HEK293T (cell line): ENCODE measurements at regions of chr14 and their contacts with region 1.

Region 1: GRCh38 chr14:93115069-93115820 is 480 bp downstream of the ITPK1 start:
- DNase-seq: peak; percentile 81

Region 2: GRCh38 chr14:93073910-93074769 is 41.1 kb before region 1 on chr14:
- CTCF ChIA-PET with region 1: no interaction called
- POLR2A ChIA-PET with region 1: no interaction called
- DNase-seq: no peak

Region 3: DNA sequence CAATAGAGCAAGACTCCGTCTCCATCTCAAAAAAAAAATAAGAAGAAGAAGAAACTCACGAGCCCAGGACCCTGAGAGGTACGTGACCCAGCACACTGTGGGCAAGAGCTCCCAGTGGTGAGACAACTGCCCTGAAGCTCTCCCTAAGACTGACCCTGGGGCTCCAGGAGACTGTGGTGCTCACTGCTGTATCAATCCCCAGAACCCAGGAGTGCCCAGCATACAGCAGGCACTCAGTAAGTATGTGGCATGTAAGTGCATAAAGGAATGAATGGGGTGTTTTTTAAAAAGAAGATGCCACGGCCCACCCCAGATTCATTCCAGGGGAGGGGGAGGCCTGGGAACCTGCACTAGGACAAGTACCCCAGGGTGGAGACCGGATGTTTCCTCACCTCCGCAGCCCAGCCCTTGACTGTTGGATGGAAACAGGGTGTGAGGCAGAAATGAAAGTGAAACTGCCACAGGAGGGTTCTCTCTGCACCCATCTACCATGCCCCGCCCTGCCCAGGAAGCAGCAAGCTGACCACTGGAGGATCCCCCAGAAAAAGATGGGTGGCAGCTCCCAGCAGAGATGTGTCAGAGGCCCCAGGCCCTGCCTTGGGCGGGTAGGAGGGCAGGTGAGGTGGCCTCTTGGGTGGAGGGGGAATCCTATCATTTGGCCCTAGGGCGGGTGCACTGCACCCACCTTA is 11.7 kb before region 1 on chr14:
- CTCF ChIA-PET with region 1: interaction called, 16 read pairs
- POLR2A ChIA-PET with region 1: no interaction called
- DNase-seq: no peak

Region 4: GRCh38 chr14:93137864-93138263 is 22.6 kb after region 1 on chr14:
- CTCF ChIA-PET with region 1: interaction called, 49 read pairs
- POLR2A ChIA-PET with region 1: interaction called, 5 read pairs
- DNase-seq: peak; percentile 41

Region 5: DNA sequence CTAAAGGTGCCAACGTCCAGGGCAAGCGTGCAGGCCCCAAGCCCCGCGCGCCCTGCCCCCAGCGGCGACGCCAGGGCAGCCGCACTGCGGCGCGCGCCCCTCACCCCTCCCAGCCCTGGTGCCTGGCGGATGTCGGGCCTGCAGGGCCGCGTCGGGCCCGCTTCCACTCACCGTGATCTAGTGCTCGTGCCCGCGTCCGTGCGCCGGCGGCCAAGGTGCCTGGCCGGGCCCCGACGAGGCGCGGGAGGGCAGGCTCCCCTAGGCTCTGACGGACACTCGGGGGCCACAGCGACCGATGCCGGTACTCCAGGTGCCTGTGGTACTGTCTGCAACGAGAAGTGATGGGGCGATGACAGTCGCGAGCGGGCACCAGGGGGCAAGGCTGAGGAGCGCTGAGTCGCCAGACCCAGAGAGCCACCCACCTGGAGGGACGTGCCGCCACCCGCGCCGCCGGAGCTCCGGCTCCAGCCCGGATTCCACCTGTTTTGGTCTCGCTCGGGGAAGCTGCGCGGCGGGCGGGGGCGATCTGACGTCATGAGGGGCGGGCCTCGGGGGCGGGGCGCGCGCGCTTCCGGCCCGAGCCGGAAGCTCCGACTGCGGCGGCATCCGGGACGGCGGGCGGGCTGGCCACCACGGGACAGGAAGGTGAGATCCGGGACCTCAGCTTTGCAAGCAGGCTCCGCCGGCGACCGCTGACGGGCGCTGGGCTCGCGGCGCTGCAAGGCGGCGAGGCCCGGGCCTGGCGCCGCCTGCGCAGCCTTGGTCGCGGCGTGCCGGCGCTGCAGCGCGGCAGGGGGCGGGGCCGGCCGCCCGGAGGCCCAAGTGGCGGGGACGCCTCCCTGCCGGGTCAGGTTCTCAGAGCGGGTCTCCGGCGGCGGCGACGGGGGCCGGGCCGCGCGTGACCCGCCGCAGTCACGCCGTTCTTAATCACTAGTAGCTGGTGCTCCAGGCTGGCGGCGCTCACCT is 69.4 kb after region 1 on chr14 and contains the starts of genes LYSET and MOAP1:
- CTCF ChIA-PET with region 1: interaction called, 9 read pairs
- POLR2A ChIA-PET with region 1: interaction called, 25 read pairs
- DNase-seq: peak; percentile 91